ENCODE measurements at regions of chr16 and their contacts with region 1.

Region 1: DNA sequence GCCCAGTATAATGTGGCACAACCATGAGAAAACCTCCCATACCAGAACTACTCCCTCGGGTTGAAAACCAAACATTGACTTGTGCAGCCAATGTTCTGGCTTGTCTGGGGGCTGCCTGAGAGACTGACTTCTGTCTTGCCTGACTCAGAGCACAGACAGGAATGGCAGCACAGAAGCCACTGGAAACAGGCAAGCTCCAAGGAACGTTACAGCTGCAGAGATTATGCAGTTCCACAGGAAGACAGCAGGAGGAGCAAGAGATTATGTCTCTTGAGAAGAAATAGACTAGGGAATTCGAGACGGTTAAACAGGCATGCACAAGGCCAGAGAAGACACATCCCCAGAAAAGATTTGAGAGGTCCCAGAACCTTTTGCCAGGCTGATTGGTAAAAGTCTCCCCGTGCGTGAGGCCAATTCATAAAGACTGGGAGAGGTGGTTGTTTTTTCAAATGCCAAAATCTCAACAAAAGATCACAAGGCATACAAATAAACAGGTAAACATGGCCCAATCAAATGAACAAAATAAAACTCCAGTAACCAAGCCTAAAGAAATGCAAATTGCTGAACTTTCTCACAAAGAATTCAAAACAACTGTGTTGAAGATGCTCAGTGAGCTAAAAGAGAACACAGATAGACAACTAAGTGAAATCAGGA is 90.6 kb upstream of the CDH5 start:
- DNase-seq: no peak
- ATAC-seq: peak in 1 of 4 donors; percentile 38
- H3K4me3 ChIP-seq: no peak overlapping the region
- H3K27ac ChIP-seq: no peak overlapping the region
- H3K4me1 ChIP-seq: peaks cover 0 to 4% (median 0%) of the 10 kb centered on the region in 12 donors
- H3K27me3 ChIP-seq: peaks cover 0 to 6% (median 0%) of the 10 kb centered on the region in 9 donors
- CTCF ChIP-seq: peak; percentile 25 to 63 (median 44)
- POLR2A ChIP-seq: no peak

Region 2: GRCh38 chr16:66223176-66223780 is 52.6 kb before region 1 on chr16:
- intact Hi-C with region 1: no loop called
- DNase-seq: peak in 1 of 5 donors; percentile 42
- ATAC-seq: peak in 3 of 4 donors; percentile 31 to 56 (median 54)
- H3K4me3 ChIP-seq: no peak overlapping the region
- H3K27ac ChIP-seq: no peak overlapping the region
- H3K4me1 ChIP-seq: peaks cover 0 to 6% (median 0%) of the 10 kb centered on the region in 12 donors
- H3K27me3 ChIP-seq: no peaks in the 10 kb centered on the region
- CTCF ChIP-seq: no peak
- POLR2A ChIP-seq: no peak

Region 3: GRCh38 chr16:66315210-66315825 is 39.4 kb after region 1 on chr16:
- intact Hi-C with region 1: loop called in 2 of 10 experiments (anchors 2 to 5 kb)
- DNase-seq: peak in 4 of 5 donors; percentile 52 to 72 (median 58)
- ATAC-seq: peak; percentile 70 to 95 (median 86)
- H3K4me3 ChIP-seq: no peak overlapping the region
- H3K27ac ChIP-seq: no peak overlapping the region
- H3K4me1 ChIP-seq: peaks cover 0 to 10% (median 5%) of the 10 kb centered on the region in 12 donors
- H3K27me3 ChIP-seq: no peaks in the 10 kb centered on the region
- CTCF ChIP-seq: peak; percentile 88 to 98 (median 95)
- POLR2A ChIP-seq: no peak

Region 4: GRCh38 chr16:66668777-66669444 is 393.0 kb after region 1 on chr16:
- intact Hi-C with region 1: no loop called
- DNase-seq: no peak
- ATAC-seq: no peak
- H3K4me3 ChIP-seq: no peak overlapping the region
- H3K27ac ChIP-seq: no peak overlapping the region
- H3K4me1 ChIP-seq: peaks cover 0 to 10% (median 0%) of the 10 kb centered on the region in 12 donors
- H3K27me3 ChIP-seq: no peaks in the 10 kb centered on the region
- CTCF ChIP-seq: no peak
- POLR2A ChIP-seq: no peak

Measured in heart left ventricle (tissue), 16 donors.